G401 (cell line): ENCODE measurements at regions of chr9 and their contacts with region 1.

Region 1: GRCh38 chr9:124320062-124320973 is 62.6 kb downstream of the NEK6 start:
- DNase-seq: peak; percentile 43

Region 2: GRCh38 chr9:124126571-124127289 is 193.6 kb before region 1 on chr9:
- in situ Hi-C with region 1: loop called (anchors 10 kb)
- DNase-seq: peak; percentile 40